Activated CD4-positive, alpha-beta T cell treated with anti-CD3 and anti-CD28 coated beads, Interleukin-2, amount 10 ng/mL, durations not matched to agents 24 days and 14 days (primary cell): ENCODE measurements at regions of chr1 and their contacts with region 1.

Region 1: DNA sequence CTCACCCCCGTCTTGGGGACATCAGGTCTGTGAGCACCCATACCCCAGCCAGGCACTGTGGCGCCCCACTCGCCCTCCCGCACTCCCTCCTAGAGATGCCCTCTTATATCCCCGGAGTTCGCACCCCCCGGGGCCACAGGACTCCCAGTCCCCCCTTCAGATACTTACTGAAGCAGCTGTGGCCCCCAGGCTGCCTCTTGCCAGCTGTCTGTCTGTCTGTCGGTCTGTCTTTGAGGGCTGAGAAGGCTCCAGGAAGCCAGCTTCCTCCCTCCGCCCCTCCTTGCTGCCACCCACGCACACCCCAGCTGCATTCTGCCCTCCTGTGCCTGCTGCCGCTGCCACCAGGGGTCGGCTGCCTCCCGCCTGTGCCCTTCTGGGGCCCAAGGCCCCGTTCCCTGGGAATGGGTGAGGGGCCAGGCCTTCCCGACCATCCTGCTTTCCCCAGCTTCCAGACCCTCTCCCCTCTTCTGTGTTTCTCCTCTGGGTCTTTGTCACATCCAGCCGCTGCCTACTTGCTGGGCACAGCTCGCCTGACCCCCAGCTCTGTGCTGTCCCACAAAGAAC is at the start of gene PTPN7:
- DNase-seq: peak; percentile 89
- H3K4me3 Mint-ChIP-seq: peak within 1 kb of the TSS; percentile 99
- H3K27ac Mint-ChIP-seq: peak within 1 kb of the TSS; percentile 97
- H3K4me1 Mint-ChIP-seq: peaks cover 71% of the 10 kb centered on the region
- H3K27me3 Mint-ChIP-seq: no peaks in the 10 kb centered on the region
- total RNA-seq, gene PTPN7: 475 and 478 TPM in 2 replicates

Region 2: GRCh38 chr1:202144402-202145067 is 15.9 kb before region 1 on chr1 and contains the start of gene ARL8A:
- intact Hi-C with region 1: loop called (anchors 1 kb)
- DNase-seq: peak; percentile 94
- H3K4me3 Mint-ChIP-seq: peak within 1 kb of the TSS; percentile 93
- H3K27ac Mint-ChIP-seq: peak within 1 kb of the TSS; percentile 92
- H3K4me1 Mint-ChIP-seq: peaks cover 27% of the 10 kb centered on the region
- H3K27me3 Mint-ChIP-seq: no peaks in the 10 kb centered on the region
- total RNA-seq, gene ARL8A: 51.9 and 57.4 TPM in 2 replicates

Region 3: DNA sequence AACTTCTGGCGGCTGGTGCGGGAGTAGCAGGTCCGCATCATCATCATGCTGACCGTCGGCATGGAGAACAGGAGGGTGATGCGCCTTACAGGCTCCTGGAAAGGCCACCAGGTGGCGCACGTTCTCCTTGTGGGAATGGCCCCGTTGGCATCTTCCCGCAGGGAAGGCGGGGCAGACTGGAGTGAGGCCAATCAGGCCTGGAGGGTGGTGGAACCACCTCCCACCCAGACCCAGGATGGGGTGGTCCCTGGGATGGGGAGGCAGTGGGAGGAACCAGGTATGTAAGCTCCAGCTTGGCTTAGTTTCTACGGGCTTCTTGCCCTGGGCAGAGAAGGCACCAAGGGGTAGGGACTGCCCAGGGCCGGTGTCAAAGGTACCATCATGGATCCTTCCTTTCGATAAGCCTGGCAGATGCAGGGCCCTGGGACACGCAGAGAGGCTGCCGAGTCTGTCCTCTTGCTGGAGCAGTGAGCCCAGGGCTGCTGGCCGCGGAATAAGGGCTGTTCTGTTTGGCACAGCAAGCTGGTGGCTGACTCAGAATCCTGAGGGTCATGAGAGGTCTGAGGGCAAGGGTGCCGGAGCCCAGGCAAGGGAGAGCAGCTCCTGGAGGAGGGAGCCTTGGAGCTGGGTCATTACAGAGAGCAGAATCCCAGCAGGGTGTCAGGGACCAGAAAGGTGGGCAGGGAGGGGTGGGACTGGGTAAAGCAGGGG is 24.4 kb after region 1 on chr1:
- intact Hi-C with region 1: no loop called
- DNase-seq: peak; percentile 91
- H3K4me3 Mint-ChIP-seq: no peak overlapping the region
- H3K27ac Mint-ChIP-seq: no peak overlapping the region
- H3K4me1 Mint-ChIP-seq: peaks cover 13% of the 10 kb centered on the region
- H3K27me3 Mint-ChIP-seq: peaks cover 4% of the 10 kb centered on the region

Region 4: GRCh38 chr1:202200112-202200566 is 39.7 kb after region 1 on chr1:
- intact Hi-C with region 1: no loop called
- DNase-seq: no peak
- H3K4me3 Mint-ChIP-seq: no peak overlapping the region
- H3K27ac Mint-ChIP-seq: no peak overlapping the region
- H3K4me1 Mint-ChIP-seq: peaks cover 2% of the 10 kb centered on the region
- H3K27me3 Mint-ChIP-seq: peaks cover 36% of the 10 kb centered on the region

Region 5: DNA sequence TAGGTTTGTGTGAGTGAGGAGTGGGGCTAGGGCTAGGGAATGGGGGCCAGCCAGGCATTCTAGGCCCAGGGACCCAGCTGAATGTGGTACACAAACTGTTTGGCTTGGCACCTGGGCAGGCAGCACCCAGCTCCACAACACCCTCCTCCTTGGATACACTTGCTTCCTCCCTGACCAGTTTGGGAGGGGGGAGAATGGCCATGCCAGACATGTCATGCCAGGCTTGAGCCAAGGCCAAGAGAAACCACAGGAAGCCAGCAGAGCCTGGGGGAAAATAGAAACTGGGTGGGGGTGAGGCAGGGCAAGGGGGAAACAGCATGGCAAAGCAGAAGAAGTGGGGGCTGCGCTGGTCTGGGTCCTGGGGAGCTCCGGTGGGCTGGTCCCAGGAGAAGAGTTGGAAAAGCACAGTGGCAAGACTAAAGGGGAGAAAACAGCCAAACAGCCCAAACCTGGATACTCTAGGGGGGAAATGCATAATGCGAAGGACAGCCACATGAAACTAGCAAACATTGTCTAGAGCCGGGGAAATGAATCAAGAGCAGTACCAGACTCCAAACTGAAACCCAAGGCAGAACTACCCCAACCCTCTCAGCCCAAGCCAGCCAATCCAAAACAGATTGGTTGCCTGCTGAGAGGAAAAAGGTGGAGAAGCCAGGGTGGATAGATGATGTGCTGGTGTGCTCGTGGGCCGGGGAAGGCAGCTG is 81.1 kb after region 1 on chr1:
- intact Hi-C with region 1: no loop called
- DNase-seq: no peak
- H3K4me3 Mint-ChIP-seq: no peak overlapping the region
- H3K27ac Mint-ChIP-seq: no peak overlapping the region
- H3K4me1 Mint-ChIP-seq: peaks cover under 1% of the 10 kb centered on the region
- H3K27me3 Mint-ChIP-seq: peaks cover 13% of the 10 kb centered on the region

Region 6: DNA sequence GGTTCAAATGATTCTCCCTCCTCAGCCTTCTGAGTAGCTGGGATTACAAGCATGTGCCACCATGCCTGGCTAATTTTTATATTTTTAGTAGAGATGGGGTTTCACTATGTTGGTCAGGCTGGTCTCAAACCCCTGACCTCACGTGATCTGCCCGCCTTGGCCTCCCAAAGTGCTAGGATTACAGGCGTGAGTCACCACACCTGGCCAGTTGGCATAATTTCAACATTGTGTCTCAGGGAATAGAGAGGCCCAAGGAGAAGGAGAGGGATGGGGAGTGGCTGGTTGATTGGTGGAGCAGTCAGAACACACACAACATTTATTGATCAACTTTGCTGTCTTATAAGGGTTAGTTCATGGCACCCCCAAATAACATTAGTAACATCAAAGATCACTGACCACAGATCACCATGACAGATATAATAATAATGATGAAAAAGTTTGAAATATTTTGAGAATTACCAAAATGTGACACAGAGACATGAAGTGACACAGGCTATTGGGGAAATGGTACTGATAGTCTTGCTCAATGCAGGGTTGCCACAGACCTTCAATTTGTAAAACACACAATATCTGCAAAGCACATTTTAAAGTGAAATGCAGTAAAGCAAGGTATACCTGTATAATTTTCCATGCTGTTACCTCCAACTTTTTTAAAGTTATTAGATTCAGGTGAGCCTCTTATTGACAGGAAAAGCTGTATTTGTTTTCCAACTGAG is 822.4 kb after region 1 on chr1:
- intact Hi-C with region 1: no loop called
- DNase-seq: no peak
- H3K4me3 Mint-ChIP-seq: no peak overlapping the region
- H3K27ac Mint-ChIP-seq: no peak overlapping the region
- H3K4me1 Mint-ChIP-seq: no peaks in the 10 kb centered on the region
- H3K27me3 Mint-ChIP-seq: peaks cover 26% of the 10 kb centered on the region